Naive thymus-derived CD8-positive, alpha-beta T cell (primary cell): ENCODE measurements at regions of chr14 and their contacts with region 1.

Region 1: GRCh38 chr14:99266181-99267178 is 5.5 kb downstream of the BCL11B start:
- DNase-seq: peak; percentile 81 to 92 (median 89)
- ATAC-seq: peak; percentile 19 to 34
- H3K4me3 Mint-ChIP-seq: peak overlapping the region; percentile 88 to 100 (median 98)
- H3K27ac Mint-ChIP-seq: peak overlapping the region; percentile 99 to 100 (median 100)
- H3K4me1 Mint-ChIP-seq: peaks cover 36 to 73% (median 53%) of the 10 kb centered on the region in 4 donors
- H3K27me3 Mint-ChIP-seq: peaks cover 0 to 8% (median 0%) of the 10 kb centered on the region in 5 donors

Region 2: DNA sequence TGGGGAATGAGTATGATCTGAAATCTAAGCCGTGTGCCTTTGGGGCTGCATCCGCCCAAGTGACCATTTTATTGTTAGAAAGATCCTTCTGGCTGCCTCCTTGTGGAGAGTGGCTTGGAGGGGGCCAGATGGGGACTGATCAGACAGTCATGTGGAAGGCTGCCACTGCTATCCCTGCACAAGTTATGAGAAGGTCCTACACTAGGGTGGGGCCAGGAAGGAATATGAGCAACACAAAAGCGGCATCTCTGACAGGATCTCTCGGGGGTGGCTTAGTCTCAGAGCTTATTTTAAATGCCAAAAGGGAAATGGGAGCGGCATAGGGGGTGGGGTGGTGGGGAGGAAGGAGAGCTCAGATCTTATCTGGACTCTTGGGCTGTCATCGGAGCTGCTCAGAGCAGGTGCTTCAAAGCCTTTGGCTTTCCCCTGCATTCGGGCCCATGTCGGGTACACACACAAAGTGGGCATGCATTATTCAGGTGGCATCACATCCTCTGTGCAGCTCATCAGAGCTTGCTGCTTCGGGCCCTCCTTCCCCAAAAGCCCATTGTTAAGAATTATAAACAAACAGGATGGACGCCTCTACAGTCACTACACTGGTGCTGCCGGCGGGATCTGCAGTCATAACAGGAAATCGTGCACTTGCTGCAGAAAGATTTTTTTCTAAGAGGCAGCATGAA is 1663.9 kb before region 1 on chr14:
- POLR2A ChIA-PET with region 1: interaction called, 12 read pairs
- DNase-seq: peak; percentile 52 to 91 (median 78)
- ATAC-seq: peak; percentile 88 to 92
- H3K4me3 Mint-ChIP-seq: no peak overlapping the region
- H3K27ac Mint-ChIP-seq: no peak overlapping the region
- H3K4me1 Mint-ChIP-seq: peaks cover 9 to 31% (median 18%) of the 10 kb centered on the region in 4 donors
- H3K27me3 Mint-ChIP-seq: no peaks in the 10 kb centered on the region

Region 3: GRCh38 chr14:98167705-98168104 is 1098.8 kb before region 1 on chr14:
- POLR2A ChIA-PET with region 1: interaction called, 26 read pairs
- DNase-seq: peak in 3 of 10 donors; percentile 25 to 41 (median 34)
- ATAC-seq: peak; percentile 29 to 49
- H3K4me3 Mint-ChIP-seq: peak overlapping the region; percentile 36 to 83 (median 76)
- H3K27ac Mint-ChIP-seq: peak overlapping the region; percentile 90 to 99 (median 97)
- H3K4me1 Mint-ChIP-seq: peaks cover 52 to 96% (median 88%) of the 10 kb centered on the region in 4 donors
- H3K27me3 Mint-ChIP-seq: no peaks in the 10 kb centered on the region

Region 4: GRCh38 chr14:98210045-98210672 is 1056.3 kb before region 1 on chr14:
- POLR2A ChIA-PET with region 1: interaction called, 60 read pairs
- DNase-seq: peak; percentile 35 to 84 (median 58)
- ATAC-seq: peak; percentile 69 to 75
- H3K4me3 Mint-ChIP-seq: peak overlapping the region; percentile 69 to 85 (median 78)
- H3K27ac Mint-ChIP-seq: peak overlapping the region; percentile 96 to 100 (median 98)
- H3K4me1 Mint-ChIP-seq: peaks cover 57 to 98% (median 90%) of the 10 kb centered on the region in 4 donors
- H3K27me3 Mint-ChIP-seq: no peaks in the 10 kb centered on the region

Region 5: GRCh38 chr14:99177886-99178835 is 88.3 kb before region 1 on chr14:
- POLR2A ChIA-PET with region 1: interaction called, 23 read pairs
- DNase-seq: peak in 4 of 10 donors; percentile 0 to 37 (median 10)
- ATAC-seq: peak in 1 of 2 donors; percentile 1
- H3K4me3 Mint-ChIP-seq: peak overlapping the region; percentile 58 to 88 (median 72)
- H3K27ac Mint-ChIP-seq: peak overlapping the region; percentile 90 to 98 (median 94)
- H3K4me1 Mint-ChIP-seq: peaks cover 35 to 64% (median 59%) of the 10 kb centered on the region in 4 donors
- H3K27me3 Mint-ChIP-seq: no peaks in the 10 kb centered on the region

Region 6: DNA sequence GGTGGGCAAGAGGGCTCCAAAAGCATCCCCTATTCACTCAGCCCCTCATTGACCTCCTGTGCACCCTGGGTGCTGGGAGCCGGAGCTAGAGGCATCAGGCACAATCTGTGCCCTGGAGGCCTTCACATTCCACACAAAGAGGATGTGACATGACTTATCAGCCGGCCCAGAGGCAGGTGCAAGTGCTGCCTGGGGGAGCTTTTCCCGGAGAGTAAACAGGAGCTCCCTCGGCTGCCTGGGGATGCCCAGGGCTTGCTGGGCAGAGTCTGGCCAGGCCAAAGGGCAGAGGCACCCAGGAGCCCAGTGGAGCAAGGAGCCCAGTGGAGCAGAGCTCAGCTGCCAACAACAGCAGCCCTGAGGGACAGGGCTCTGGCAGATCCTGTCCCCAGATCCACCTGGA is 59.0 kb before region 1 on chr14:
- POLR2A ChIA-PET with region 1: interaction called, 446 read pairs
- DNase-seq: no peak
- ATAC-seq: no peak
- H3K4me3 Mint-ChIP-seq: peak overlapping the region; percentile 36 to 98 (median 84)
- H3K27ac Mint-ChIP-seq: peak overlapping the region; percentile 87 to 99 (median 96)
- H3K4me1 Mint-ChIP-seq: peaks cover 72 to 100% (median 100%) of the 10 kb centered on the region in 4 donors
- H3K27me3 Mint-ChIP-seq: no peaks in the 10 kb centered on the region

Region 7: GRCh38 chr14:99215277-99215676 is 51.2 kb before region 1 on chr14:
- POLR2A ChIA-PET with region 1: interaction called, 1,316 read pairs
- DNase-seq: no peak
- ATAC-seq: no peak
- H3K4me3 Mint-ChIP-seq: peak overlapping the region; percentile 67 to 98 (median 86)
- H3K27ac Mint-ChIP-seq: peak overlapping the region; percentile 87 to 99 (median 96)
- H3K4me1 Mint-ChIP-seq: peaks cover 69 to 96% (median 93%) of the 10 kb centered on the region in 4 donors
- H3K27me3 Mint-ChIP-seq: no peaks in the 10 kb centered on the region